ENCODE measurements at regions of chr7 and their contacts with region 1.

Region 1: GRCh38 chr7:44885394-44886317 is at the start of gene PURB:
- DNase-seq: peak; percentile 94 to 99 (median 97)
- ATAC-seq: peak; percentile 86
- H3K4me3 ChIP-seq: peak within 1 kb of the TSS; percentile 64 to 67
- H3K4me3 Mint-ChIP-seq: peak within 1 kb of the TSS; percentile 92
- H3K27ac ChIP-seq: peak within 1 kb of the TSS; percentile 98 to 100
- H3K27ac Mint-ChIP-seq: peak within 1 kb of the TSS; percentile 99
- H3K4me1 ChIP-seq: peaks cover 36% of the 10 kb centered on the region
- H3K4me1 Mint-ChIP-seq: peaks cover 45% of the 10 kb centered on the region
- H3K27me3 ChIP-seq: no peaks in the 10 kb centered on the region
- H3K27me3 Mint-ChIP-seq: no peaks in the 10 kb centered on the region
- CTCF ChIP-seq: no peak
- total RNA-seq, gene PURB: 16.3 to 16.5 TPM

Region 2: DNA sequence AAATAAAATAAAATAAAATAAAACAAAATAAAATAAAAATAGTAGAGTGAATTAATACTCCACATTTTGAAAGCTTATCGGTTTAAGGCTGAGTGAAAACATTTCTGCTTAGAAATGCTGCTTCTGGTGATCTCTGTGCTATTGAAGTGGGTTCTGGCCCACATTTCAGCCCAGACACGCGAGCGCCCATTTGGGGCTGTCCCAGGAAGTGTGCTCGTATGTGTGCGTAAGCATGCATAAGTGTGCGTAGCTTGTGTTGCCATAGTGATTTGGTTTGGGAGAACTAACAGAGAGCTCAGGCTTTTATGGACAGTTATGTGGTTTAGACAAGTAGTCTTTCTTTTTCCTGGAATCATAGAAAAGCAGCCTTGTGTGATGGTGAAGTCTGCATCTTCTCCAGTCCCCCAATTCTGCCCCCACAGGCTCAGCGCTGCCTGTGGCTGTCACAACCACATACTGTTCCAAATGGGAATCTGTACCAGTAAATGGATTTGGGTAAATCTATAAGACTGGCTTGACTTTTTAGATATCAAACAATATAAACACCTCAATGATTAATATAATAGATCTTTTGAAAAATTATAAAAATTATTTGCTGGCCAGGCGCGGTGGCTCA is 29.4 kb after region 1 on chr7:
- CTCF ChIA-PET with region 1: interaction called, 4 read pairs
- POLR2A ChIA-PET with region 1: interaction called, 9 read pairs
- intact Hi-C with region 1: loop called (anchors 1 to 2 kb)
- DNase-seq: peak; percentile 25 to 92 (median 54)
- ATAC-seq: peak; percentile 92
- H3K4me3 ChIP-seq: no peak overlapping the region
- H3K4me3 Mint-ChIP-seq: no peak overlapping the region
- H3K27ac ChIP-seq: peak overlapping the region in 1 of 2 experiments; percentile 41
- H3K27ac Mint-ChIP-seq: peak overlapping the region; percentile 87
- H3K4me1 ChIP-seq: no peaks in the 10 kb centered on the region
- H3K4me1 Mint-ChIP-seq: peaks cover 4% of the 10 kb centered on the region
- H3K27me3 ChIP-seq: no peaks in the 10 kb centered on the region
- H3K27me3 Mint-ChIP-seq: no peaks in the 10 kb centered on the region
- CTCF ChIP-seq: no peak

Region 3: DNA sequence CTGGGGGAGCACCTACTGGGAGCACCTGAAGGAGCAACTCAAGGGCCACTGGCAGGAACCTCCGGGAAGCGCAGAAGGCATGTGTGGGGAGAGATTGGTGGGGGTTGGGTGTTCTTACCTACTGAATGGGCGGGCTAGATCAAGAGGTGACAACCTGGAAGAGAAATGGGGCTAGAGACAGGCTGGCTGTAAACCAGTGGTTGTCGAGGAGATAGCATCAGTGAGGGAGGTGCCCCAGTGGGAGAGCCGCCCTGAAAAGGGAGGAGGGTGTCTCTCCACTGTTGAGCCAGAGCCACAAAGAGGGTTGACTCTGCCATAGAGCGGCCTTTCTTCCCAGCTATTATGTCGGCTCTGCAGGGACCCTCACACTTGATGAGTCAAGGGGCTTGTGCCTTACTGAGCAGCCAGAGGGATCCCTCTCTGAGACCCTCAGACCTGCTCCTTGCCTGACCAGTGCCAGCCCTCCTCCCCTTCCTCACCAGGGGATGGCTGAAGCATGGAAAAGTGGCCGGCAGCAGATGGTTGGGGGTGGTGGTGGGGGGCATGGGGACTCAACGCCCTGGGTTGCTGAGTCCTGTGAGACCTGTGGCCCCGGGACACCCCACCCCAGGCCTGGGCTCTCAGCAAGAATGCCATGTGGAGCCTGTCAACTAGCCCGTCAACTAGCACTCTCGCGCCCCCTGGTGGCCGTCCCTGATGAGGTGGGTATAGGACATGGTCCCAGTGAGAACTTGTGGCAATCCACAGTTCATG is 36.1 kb after region 1 on chr7:
- CTCF ChIA-PET with region 1: interaction called, 14 read pairs
- POLR2A ChIA-PET with region 1: interaction called, 5 read pairs
- intact Hi-C with region 1: no loop called
- DNase-seq: peak; percentile 88 to 99 (median 92)
- ATAC-seq: peak; percentile 94
- H3K4me3 ChIP-seq: no peak overlapping the region
- H3K4me3 Mint-ChIP-seq: no peak overlapping the region
- H3K27ac ChIP-seq: no peak overlapping the region
- H3K27ac Mint-ChIP-seq: no peak overlapping the region
- H3K4me1 ChIP-seq: no peaks in the 10 kb centered on the region
- H3K4me1 Mint-ChIP-seq: peaks cover 5% of the 10 kb centered on the region
- H3K27me3 ChIP-seq: peaks cover 0 to 2% of the 10 kb centered on the region in 2 experiments
- H3K27me3 Mint-ChIP-seq: peaks cover under 1% of the 10 kb centered on the region
- CTCF ChIP-seq: peak; percentile 87

Region 4: DNA sequence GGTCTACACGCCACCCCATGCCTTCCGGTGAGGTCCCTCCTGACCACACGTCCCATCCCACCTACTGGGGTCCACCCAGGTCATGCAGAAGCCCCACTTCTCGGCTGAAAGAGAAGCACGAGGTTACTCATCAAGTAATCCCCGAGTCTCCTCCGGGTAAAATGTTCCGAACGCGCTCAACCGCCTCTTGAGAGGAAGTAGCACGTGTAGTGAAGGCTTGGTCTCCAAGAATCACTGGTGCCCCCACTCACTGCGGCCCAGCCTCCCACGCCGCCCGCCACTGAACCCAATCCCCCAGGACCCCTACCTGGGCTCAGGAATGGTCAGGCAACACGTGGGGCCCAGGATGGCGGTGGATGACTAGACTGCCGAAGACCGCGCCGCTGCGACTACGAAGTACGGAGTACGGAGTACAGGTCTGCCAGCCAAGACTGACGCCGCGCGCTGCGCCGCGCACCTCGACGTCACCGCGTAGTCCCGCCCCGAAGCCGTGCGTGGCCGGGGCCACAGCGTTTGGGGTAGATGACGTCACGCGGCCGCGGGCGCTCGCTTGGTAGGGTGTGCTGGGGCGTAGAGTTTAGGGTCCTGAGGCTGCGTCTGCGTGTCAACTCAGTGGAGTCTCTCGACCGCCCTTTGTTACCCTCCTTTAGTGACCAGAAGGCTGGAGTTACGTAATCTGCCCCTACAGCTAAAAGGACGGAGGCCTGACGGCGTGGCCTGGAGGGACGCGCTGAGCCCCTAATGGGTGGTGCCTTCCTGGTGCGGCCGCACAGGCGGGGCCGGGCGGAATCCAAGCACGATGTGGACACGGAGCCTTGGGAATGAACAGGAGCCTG is 100.8 kb after region 1 on chr7:
- CTCF ChIA-PET with region 1: no interaction called
- POLR2A ChIA-PET with region 1: interaction called, 4 read pairs
- intact Hi-C with region 1: loop called in 1 of 2 experiments (anchors 5 kb)
- DNase-seq: peak; percentile 86 to 98 (median 96)
- ATAC-seq: peak; percentile 93
- H3K4me3 ChIP-seq: peak overlapping the region; percentile 84 to 92
- H3K4me3 Mint-ChIP-seq: peak overlapping the region; percentile 96
- H3K27ac ChIP-seq: peak overlapping the region; percentile 93 to 99
- H3K27ac Mint-ChIP-seq: peak overlapping the region; percentile 98
- H3K4me1 ChIP-seq: peaks cover 37% of the 10 kb centered on the region
- H3K4me1 Mint-ChIP-seq: peaks cover 52% of the 10 kb centered on the region
- H3K27me3 ChIP-seq: no peaks in the 10 kb centered on the region
- H3K27me3 Mint-ChIP-seq: no peaks in the 10 kb centered on the region
- CTCF ChIP-seq: no peak